ENCODE measurements at regions of chr22 and their contacts with region 1.

Region 1: DNA sequence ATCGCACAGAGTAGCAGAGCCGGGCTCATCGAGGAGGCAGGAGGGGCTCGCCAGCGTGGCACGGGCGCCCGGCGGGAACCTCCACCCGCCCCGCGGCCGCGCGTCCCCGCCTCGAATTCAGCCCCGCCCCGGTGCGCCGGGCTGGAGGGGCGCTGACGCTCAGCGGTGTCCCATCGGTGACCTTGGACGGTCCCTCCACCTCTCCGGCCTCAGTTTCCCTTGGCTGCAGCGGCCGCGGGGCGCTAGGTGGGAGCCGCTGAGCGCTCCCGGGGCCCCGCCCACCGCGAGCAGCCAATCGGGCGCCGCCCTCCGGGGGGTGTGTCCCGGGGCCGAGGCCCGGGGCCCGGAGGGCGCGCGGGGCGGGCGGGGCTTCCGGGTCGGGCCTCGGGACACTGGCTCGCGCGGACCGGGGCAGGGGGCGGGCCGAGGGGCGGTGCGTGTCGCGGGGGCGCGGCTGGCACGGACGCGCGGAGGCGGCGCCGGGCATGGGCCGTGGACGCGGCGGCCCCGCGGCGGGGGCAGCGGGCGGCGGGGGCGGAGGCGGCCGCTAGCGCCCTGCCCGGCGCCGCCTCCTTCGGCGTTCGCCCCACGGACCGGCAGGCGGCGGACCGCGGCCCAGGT is at the start of gene PPARA:
- DNase-seq: peak; percentile 59
- H3K4me3 ChIP-seq: peak within 1 kb of the TSS; percentile 76 to 85 (median 83)
- H3K27ac ChIP-seq: peak within 1 kb of the TSS; percentile 23
- H3K4me1 ChIP-seq: peaks cover 30% of the 10 kb centered on the region
- H3K27me3 ChIP-seq: no peaks in the 10 kb centered on the region
- CTCF ChIP-seq: no peak
- total RNA-seq, gene PPARA: 10.3 to 15.5 TPM

Region 2: DNA sequence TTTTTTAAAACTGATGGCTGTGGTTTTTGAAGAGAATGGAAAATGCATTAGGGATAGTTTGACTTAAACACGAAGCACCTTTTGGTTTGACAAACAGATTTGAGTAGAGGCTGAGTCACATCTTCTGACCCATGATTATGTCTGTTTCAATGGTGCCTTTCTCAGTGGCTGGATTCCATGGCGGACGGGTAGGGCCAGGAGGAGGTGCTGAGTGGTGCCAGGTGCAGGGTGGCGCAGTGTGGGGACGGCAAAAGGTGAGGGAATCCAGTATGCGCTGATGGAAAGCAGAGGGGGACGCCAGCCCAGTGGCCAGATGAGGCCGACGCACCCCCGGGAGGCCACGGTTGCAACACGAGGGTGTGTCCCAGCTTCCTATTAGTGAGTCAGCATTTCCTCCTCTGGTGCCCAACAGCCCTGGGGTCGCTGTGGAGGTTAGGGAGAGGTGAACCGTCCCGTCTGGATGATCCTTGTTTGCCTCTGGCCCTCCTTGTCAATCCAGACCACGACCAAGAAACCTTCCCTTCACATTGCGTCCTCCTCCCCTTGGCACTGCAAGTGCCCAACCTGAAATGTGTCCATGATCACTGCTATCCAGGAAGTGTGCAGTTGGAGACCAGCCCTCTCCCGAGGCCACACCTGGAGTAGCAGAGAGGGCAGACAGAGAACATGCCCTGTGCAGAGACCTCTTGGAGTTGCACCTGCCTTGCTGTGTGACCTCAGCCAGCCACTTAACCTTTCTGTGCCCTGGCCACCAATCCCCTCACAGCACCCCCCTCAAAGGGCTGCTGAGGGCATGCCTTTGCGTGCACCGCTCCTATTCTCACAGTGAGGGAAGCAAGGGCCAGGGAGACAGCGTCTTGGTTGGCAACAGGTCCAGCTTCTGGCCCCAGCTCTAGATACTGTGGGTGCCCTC is 511.1 kb before region 1 on chr22:
- CTCF ChIA-PET with region 1: no interaction called
- dilution Hi-C with region 1: loop called (anchors 5 kb)
- in situ Hi-C with region 1: no loop called
- intact Hi-C with region 1: no loop called
- DNase-seq: peak; percentile 79
- H3K4me3 ChIP-seq: no peak overlapping the region
- H3K27ac ChIP-seq: peak overlapping the region; percentile 78
- H3K4me1 ChIP-seq: peaks cover 22% of the 10 kb centered on the region
- H3K27me3 ChIP-seq: no peaks in the 10 kb centered on the region
- CTCF ChIP-seq: peak in 1 of 2 donors; percentile 13

Region 3: DNA sequence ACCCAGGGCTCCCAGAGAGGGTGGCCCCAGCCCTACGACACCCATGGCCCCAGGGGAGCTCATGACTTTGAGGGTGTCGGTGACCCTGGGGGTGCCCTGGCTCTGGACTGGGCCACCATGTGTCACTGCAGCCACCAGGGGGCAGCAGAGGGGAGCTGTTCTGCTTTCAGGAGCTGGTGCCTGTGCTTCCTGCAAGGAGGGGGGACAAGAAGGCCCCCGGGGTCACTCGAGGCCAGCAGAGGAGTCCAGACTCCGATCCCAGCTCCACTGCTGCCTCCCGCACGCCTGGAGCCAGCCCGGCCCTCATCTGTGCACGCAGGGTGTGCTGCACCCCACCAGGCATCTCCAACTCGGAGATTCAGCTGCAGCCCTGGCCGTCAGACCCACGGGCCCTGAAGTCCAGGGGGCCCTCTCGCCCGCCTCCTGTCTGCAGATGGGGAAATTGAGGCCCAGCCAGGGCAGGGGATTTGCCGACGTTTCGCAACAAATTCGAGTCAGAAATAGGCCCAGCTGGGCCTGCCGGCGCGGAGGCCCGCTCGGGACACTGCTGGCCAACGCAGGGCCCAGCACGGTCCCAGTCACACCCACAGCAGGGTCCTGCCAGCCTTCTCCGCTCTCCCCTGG is 143.7 kb before region 1 on chr22:
- CTCF ChIA-PET with region 1: no interaction called
- dilution Hi-C with region 1: loop called (anchors 10 kb)
- in situ Hi-C with region 1: no loop called
- intact Hi-C with region 1: no loop called
- DNase-seq: peak; percentile 78
- H3K4me3 ChIP-seq: peak overlapping the region; percentile 13 to 40 (median 19)
- H3K27ac ChIP-seq: peak overlapping the region; percentile 85
- H3K4me1 ChIP-seq: peaks cover 46% of the 10 kb centered on the region
- H3K27me3 ChIP-seq: no peaks in the 10 kb centered on the region
- CTCF ChIP-seq: peak; percentile 77 to 89

Region 4: DNA sequence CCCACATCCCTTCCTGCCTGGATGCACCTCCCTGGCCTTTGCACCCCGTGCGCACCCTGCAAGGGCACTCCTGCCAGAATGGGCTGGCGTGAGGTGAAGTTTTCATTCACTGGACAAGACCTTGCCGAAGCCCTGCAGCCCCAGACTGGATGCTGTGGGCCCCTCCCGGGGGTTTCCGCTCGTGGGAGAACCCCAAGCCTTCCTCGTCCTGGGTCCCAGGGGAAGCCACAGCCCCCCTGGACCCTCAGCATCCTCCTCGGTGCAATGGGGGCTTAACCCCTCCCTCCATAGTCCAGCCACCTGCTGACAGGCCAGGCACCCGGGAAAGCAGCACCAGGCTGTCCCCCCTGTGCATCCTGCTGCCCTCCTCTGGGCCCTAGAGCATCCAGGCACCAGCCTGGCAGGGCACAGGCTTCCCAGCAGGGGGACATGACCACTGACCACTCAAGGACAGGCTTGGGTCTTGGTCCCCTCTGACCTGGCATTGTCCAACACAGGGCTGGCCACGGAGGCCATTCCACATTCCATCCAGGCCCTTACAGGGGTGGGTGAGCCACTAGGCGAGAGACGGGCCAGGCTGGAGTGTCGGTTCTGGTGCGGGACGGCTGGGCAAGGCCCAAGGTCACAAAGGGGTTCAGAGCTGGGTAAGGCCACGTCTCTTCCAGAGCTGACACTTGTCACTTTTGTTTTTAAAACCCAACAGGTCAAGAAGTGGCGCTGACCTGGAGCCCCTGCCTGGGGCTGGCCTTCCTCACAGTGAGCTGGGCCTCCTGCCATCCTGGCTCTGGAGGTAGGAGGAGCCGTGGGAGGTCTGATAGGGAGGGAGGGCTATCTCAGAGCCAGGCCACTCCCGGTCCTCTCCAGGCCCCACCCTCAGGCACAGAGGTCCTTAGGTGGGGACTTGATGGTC is 41.3 kb before region 1 on chr22:
- CTCF ChIA-PET with region 1: no interaction called
- dilution Hi-C with region 1: loop called (anchors 5 kb)
- in situ Hi-C with region 1: no loop called
- intact Hi-C with region 1: no loop called
- DNase-seq: peak; percentile 58
- H3K4me3 ChIP-seq: no peak overlapping the region
- H3K27ac ChIP-seq: no peak overlapping the region
- H3K4me1 ChIP-seq: peaks cover 87% of the 10 kb centered on the region
- H3K27me3 ChIP-seq: no peaks in the 10 kb centered on the region
- CTCF ChIP-seq: peak in 1 of 2 donors; percentile 8

Region 5: DNA sequence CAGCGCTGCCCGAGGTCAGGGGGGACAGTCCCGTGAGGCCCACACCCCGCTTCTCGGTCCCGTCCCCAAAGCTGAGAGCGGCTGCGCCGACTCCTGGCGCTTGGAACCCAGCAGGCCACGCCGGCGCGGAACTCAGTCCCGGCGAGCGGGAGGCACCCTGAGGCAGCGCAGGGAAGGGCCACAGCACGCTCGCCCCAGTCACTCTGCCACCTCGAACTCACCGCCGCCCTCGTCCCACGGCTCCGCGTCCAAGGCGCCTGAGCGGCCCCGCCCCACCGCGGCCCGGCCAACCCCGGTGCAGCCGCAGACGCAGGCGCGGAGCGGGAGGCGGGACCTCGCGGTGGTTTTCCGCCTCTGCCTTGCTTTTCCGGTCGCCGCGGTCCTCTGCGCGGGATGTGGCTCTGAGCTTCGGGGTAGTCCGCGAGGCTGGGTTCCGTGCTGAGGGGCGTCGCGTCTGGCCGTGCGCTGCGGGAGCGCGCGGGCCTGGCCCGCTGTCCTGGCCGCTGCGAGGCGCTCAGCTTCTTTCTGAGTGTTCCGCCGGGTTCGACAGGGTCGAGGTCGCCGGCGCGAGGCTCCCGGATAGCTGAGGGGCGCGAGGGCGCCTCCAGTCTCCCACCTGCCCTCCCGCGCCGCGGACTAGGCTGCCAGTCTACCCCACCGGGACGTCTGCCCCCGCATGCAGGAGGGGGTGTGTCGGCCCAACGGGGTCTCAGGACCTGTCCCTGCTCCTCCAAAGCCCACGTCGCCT is 100.1 kb after region 1 on chr22 and contains the start of gene CDPF1:
- CTCF ChIA-PET with region 1: no interaction called
- dilution Hi-C with region 1: no loop called
- in situ Hi-C with region 1: no loop called
- intact Hi-C with region 1: loop called (anchors 5 kb)
- DNase-seq: peak; percentile 87
- H3K4me3 ChIP-seq: peak within 1 kb of the TSS; percentile 73 to 98 (median 89)
- H3K27ac ChIP-seq: peak within 1 kb of the TSS; percentile 36
- H3K4me1 ChIP-seq: peaks cover 9% of the 10 kb centered on the region
- H3K27me3 ChIP-seq: no peaks in the 10 kb centered on the region
- CTCF ChIP-seq: peak in 1 of 2 donors; percentile 18
- total RNA-seq, gene CDPF1: 5.7 to 8.0 TPM

Region 6: GRCh38 chr22:46329616-46330015 is 179.5 kb after region 1 on chr22:
- CTCF ChIA-PET with region 1: no interaction called
- dilution Hi-C with region 1: loop called (anchors 5 kb)
- in situ Hi-C with region 1: no loop called
- intact Hi-C with region 1: no loop called
- DNase-seq: no peak
- H3K4me3 ChIP-seq: no peak overlapping the region
- H3K27ac ChIP-seq: no peak overlapping the region
- H3K4me1 ChIP-seq: no peaks in the 10 kb centered on the region
- H3K27me3 ChIP-seq: no peaks in the 10 kb centered on the region
- CTCF ChIP-seq: no peak

Region 7: DNA sequence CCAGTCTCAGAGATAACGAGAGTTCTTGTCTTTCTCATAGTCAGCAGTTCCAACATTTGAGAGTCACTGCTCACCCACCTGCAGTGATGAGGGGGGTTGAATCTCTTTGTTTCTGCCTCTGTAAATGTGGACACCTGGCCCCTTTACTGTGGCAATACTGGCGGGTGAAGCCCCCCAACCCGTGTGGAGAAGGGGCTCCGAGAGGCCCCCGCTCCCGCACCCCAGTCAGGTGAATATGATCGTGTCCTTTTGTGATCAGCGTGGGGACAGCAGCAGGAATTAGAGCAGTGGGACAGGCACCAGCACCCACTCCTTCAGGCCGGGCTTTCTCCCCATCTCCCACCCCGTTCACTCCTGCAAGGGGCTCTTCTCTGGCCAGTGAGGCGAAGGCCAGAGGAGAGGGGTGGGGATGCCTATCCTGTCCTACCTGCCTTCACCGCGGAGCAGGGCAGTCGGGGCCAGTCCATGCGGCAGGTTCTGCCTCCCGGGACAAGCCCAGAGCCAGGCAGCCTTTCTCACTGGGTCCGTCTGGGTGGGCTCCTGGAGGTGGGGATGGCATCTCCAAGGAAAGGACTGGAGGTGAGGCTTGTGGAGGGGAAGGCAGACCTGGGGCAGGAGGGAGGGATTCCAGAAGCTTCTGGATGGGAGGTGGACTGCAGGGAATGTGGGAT is 400.0 kb after region 1 on chr22:
- CTCF ChIA-PET with region 1: no interaction called
- dilution Hi-C with region 1: loop called (anchors 5 kb)
- in situ Hi-C with region 1: no loop called
- intact Hi-C with region 1: no loop called
- DNase-seq: no peak
- H3K4me3 ChIP-seq: no peak overlapping the region
- H3K27ac ChIP-seq: no peak overlapping the region
- H3K4me1 ChIP-seq: peaks cover 30% of the 10 kb centered on the region
- H3K27me3 ChIP-seq: no peaks in the 10 kb centered on the region
- CTCF ChIP-seq: no peak